ENCODE measurements at regions of chr1 and their contacts with region 1.

Region 1: GRCh38 chr1:214573386-214574358 is 22.3 kb upstream of the PTPN14 start:
- DNase-seq: no peak
- ATAC-seq: no peak
- H3K4me3 ChIP-seq: no peak overlapping the region
- H3K27ac ChIP-seq: no peak overlapping the region
- H3K4me1 ChIP-seq: no peaks in the 10 kb centered on the region
- H3K27me3 ChIP-seq: no peaks in the 10 kb centered on the region
- CTCF ChIP-seq: no peak

Region 2: GRCh38 chr1:214386747-214387146 is 186.9 kb before region 1 on chr1:
- intact Hi-C with region 1: loop called in 1 of 10 experiments (anchors 10 kb)
- DNase-seq: no peak
- ATAC-seq: no peak
- H3K4me3 ChIP-seq: no peak overlapping the region
- H3K27ac ChIP-seq: no peak overlapping the region
- H3K4me1 ChIP-seq: no peaks in the 10 kb centered on the region
- H3K27me3 ChIP-seq: no peaks in the 10 kb centered on the region
- CTCF ChIP-seq: no peak

Region 3: DNA sequence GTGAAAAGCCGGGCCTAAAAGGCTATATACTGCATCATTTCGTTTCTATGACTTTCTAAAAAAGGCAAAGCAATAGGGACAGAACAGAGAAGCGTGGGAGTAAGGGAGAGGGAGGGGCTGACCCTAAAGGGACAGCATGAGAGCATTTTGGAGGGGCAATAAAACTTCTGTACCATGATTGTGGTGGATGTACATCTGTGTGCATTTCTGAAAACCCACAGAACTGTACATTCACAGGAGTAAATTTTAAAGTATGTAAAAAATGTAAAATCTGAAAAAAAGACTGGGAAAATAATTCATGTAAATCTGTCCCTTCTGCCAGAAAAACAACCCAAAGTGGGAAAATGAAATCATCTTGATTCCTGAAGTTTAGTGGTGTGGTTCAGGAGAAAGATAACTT is 264.7 kb after region 1 on chr1:
- intact Hi-C with region 1: no loop called
- DNase-seq: no peak
- ATAC-seq: no peak
- H3K4me3 ChIP-seq: no peak overlapping the region
- H3K27ac ChIP-seq: no peak overlapping the region
- H3K4me1 ChIP-seq: no peaks in the 10 kb centered on the region
- H3K27me3 ChIP-seq: peaks cover 0 to 4% (median 0%) of the 10 kb centered on the region in 7 donors
- CTCF ChIP-seq: no peak

Measured in heart right ventricle (tissue), 16 donors.